KBM-7 (cell line): ENCODE measurements at regions of chr5 and their contacts with region 1.

Region 1: DNA sequence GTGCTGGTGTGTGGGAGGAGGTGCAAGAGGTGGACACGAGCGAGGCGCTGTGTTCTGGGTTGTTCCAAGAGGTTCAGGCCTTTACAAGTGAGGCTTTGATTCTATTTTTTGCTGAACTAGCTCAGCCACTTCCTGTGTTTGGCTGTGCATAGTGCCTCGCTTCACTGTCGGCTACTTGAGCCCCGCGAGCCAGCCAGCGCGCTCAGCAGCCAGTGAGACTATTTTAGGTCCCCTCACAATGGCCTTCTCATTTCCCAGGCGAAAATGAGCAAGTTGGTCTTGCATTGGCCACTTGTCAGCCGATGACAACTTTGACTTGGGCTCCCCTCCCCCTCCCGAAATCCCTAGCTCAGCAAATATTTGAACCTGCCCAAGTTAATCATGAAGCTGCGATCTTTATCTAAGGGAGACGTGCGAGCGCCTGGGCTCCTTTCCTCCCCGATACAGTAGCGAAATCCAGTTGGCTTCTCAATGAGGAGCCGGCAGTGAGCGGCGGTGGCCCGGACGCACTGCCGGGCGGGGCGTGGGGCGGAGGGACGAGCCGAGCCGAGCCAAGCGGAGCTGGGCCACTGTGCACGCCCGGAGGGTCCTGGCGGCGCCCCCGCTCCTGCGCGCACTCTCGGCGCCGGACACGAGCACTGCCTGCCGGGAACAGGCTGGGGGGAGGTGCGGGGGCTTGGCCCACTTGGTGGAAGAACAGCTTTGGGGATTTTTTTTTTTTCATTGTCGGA is 72.6 kb downstream of the PIK3R1 start:
- DNase-seq: no peak

Region 2: GRCh38 chr5:67375608-67376007 is 912.5 kb before region 1 on chr5:
- in situ Hi-C with region 1: no loop called
- DNase-seq: no peak

Region 3: DNA sequence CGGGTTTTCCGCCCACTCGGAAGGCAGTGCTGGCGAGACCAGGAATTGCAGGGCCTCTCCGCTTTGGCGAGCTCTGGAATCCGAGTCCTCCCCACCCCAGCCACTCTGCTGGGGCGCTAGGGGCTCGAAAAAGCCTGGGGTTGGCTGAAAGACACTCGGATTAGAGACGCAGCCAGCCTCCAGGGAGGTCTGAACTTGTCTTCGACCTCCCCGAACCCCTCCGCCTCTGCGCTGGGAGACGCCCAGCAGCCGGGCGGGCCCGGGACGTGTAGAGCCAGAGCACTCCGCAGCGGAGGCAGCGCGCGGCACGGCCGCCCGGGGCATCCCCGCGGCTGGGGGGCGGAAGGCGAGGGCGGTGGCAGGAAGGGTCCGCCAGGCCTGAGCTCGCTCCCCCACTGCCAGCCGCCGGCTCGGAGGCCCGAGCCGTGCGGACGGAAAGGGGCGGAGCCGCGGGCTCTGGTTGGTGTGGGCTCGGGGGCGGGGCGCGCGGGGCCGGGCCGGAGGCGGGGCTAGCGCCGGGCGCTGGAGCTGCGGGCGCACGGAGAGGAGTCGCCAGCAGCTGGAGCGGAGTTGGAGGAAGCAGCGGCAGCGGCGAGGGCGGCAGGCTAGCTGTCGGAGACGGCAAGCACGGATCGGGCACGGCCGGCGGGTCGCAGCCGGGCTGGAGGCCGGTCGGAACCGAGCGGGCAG is 72.8 kb before region 1 on chr5 and contains the start of gene PIK3R1:
- in situ Hi-C with region 1: no loop called
- DNase-seq: peak; percentile 94

Region 4: GRCh38 chr5:68460147-68460798 is 172.1 kb after region 1 on chr5:
- in situ Hi-C with region 1: loop called (anchors 25 kb)
- DNase-seq: peak; percentile 54

Region 5: GRCh38 chr5:68962757-68963484 is 674.8 kb after region 1 on chr5:
- in situ Hi-C with region 1: loop called (anchors 25 kb)
- DNase-seq: peak; percentile 39